GM10248 (cell line): ENCODE measurements at regions of chr1 and their contacts with region 1.

Region 1: GRCh38 chr1:103788377-103788776 is 38.7 kb downstream of the AMY1C start:
- DNase-seq: no peak
- CTCF ChIP-seq: peak; percentile 34

Region 2: GRCh38 chr1:104132382-104132973 is 344.1 kb after region 1 on chr1:
- CTCF ChIA-PET with region 1: interaction called, 16 read pairs
- POLR2A ChIA-PET with region 1: no interaction called
- DNase-seq: no peak
- CTCF ChIP-seq: peak; percentile 34